Mammary epithelial cell (primary cell): ENCODE measurements at regions of chr19 and their contacts with region 1.

Region 1: GRCh38 chr19:36489118-36489919 is at the start of gene ZNF566:
- DNase-seq: peak; percentile 96
- H3K4me3 ChIP-seq: peak within 1 kb of the TSS; percentile 61 to 72 (median 68)
- H3K27ac ChIP-seq: peak within 1 kb of the TSS; percentile 87
- H3K4me1 ChIP-seq: no peaks in the 10 kb centered on the region
- H3K27me3 ChIP-seq: no peaks in the 10 kb centered on the region
- CTCF ChIP-seq: no peak
- total RNA-seq, gene ZNF566: 6.0 to 7.2 TPM

Region 2: DNA sequence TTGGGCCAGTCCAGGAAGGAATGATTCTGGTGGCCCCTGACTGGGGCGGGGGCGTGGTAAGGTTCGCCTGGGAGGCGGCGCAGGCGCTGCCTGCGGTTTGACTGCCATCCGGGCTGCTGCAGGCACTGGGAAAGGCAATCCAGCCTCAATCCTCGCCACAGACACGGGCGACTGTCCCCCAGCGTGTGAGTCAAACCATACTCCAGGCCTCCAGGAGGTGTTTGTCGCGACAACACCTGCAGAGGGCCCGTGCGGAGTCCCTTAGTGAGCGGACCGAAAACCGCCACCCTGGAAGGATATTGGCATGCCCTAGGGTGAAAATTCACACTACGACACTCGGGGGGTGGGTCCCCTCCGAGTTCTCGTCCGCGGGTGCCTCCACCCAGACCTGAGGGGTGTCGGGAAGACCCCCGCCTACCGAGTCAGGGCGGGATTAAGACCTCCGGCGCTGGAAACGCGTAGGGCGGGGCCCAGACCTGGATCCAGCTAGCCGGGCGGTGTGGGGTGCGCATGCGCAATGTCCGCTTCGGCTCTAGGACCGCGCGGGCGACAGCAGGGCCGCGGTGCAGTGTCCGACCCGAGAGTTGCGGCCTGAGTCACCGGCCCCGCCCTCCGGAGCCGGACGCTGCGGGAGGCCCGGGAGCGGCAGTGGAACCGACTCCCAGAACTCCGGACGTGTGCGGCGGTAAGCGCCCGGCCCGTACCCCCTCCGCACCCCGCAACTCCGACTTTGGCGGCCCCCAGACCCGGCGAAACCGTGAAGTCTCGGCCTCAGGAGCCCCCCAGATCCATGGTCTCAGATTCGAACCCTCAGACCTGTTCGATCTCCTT is 349.6 kb before region 1 on chr19 and contains the start of gene CAPNS1:
- CTCF ChIA-PET with region 1: no interaction called
- dilution Hi-C with region 1: no loop called
- in situ Hi-C with region 1: loop called in 1 of 2 experiments (anchors 10 kb)
- intact Hi-C with region 1: no loop called
- DNase-seq: peak; percentile 95
- H3K4me3 ChIP-seq: peak within 1 kb of the TSS; percentile 77 to 87 (median 83)
- H3K27ac ChIP-seq: peak within 1 kb of the TSS; percentile 98
- H3K4me1 ChIP-seq: peaks cover 34% of the 10 kb centered on the region
- H3K27me3 ChIP-seq: no peaks in the 10 kb centered on the region
- CTCF ChIP-seq: peak; percentile 5 to 28
- total RNA-seq, gene CAPNS1: 328 to 1,073 TPM

Region 3: DNA sequence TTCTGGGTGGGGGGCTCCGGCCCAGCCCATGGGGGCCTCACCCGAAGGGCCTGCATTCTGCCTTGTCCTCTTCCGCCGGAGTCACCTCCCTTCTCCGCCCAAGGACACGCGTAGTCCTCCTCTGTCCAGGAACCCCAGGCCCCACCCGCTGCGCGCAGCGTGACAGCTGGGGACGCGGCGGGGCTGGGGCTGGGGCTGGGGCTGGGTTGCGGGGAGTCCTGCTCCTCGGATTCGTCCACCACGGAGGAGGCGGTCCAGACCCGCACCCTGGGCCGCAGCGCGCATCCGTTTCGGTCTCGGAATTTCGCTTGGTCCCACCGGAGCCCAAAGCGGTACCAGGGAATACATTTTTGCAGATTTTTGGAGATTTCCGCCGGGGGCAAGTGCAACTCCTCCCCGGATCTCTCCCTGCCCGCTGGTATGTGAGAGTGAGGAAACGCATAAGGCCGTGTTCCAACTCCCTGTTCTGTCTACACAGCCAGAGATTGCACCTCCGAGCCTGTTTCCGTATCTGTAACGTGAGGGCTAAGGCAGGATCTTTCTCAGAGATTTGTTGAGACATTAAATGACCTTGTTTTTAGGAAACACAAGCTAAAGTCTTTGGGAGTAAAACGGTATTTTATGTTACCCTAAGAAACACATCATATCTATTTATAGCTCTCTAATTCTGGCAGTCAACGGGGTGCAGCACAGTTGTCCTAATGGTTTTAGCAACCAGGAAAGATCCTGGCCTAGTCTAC is 336.8 kb before region 1 on chr19 and contains the start of gene COX7A1:
- CTCF ChIA-PET with region 1: no interaction called
- dilution Hi-C with region 1: no loop called
- in situ Hi-C with region 1: no loop called
- intact Hi-C with region 1: no loop called
- DNase-seq: no peak
- H3K4me3 ChIP-seq: no peak within 1 kb of the TSS
- H3K27ac ChIP-seq: no peak within 1 kb of the TSS
- H3K4me1 ChIP-seq: peaks cover 23% of the 10 kb centered on the region
- H3K27me3 ChIP-seq: no peaks in the 10 kb centered on the region
- CTCF ChIP-seq: no peak
- total RNA-seq, gene COX7A1: 1.0 TPM in 1 of 2 donors, not detected in the other

Region 4: DNA sequence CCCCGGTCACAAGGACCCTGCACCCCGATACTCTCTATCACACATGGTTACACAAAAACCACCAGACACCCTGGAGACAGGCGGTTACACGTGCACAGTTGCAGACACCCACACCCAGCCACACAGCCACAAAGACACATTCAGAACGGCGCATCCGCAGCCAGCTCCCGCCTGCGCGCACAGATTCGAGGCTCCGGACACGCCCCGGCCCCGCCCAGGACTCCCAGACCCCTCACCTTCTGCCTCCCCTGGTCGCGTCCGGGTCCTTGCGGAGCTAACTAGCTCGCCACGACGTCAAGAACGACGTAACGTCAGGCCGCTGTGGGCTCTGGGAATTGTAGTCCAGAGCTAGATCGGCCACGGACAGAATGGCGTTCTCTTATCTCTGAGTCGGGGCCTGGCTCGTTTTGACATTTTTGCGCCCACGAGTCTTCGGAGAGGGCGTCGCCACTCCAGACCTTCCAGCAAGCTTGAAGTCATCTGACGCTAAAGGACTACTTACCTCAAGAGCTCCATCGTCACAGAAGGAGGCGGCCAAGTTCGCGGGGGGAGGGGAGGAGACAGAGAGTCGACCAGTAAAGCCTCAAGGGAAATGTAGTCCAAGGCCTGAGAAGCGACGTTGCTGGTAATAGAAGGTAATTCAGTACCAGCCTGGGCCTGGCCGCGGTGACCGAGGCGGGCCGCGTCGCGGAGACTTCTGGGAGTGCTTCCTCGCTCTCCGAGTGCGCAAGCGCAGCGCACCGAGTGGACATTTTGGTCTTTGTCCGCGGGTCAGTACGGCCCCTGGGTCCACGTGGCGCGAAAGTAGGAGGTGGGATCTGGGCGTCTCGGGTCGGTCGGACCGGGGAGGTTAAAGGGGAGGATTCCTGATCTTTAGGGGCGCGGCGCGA is 274.7 kb before region 1 on chr19 and contains the starts of genes ZNF146 and ZNF565:
- CTCF ChIA-PET with region 1: no interaction called
- dilution Hi-C with region 1: no loop called
- in situ Hi-C with region 1: no loop called
- intact Hi-C with region 1: loop called (anchors 1 kb)
- DNase-seq: peak; percentile 98
- H3K4me3 ChIP-seq: peak within 1 kb of the TSS; percentile 88 to 95 (median 88)
- H3K27ac ChIP-seq: peak within 1 kb of the TSS; percentile 85
- H3K4me1 ChIP-seq: peaks cover 7% of the 10 kb centered on the region
- H3K27me3 ChIP-seq: no peaks in the 10 kb centered on the region
- CTCF ChIP-seq: no peak
- total RNA-seq, gene ZNF146: 74.5 to 77.3 TPM
- total RNA-seq, gene ZNF565: 2.8 to 3.5 TPM

Region 5: DNA sequence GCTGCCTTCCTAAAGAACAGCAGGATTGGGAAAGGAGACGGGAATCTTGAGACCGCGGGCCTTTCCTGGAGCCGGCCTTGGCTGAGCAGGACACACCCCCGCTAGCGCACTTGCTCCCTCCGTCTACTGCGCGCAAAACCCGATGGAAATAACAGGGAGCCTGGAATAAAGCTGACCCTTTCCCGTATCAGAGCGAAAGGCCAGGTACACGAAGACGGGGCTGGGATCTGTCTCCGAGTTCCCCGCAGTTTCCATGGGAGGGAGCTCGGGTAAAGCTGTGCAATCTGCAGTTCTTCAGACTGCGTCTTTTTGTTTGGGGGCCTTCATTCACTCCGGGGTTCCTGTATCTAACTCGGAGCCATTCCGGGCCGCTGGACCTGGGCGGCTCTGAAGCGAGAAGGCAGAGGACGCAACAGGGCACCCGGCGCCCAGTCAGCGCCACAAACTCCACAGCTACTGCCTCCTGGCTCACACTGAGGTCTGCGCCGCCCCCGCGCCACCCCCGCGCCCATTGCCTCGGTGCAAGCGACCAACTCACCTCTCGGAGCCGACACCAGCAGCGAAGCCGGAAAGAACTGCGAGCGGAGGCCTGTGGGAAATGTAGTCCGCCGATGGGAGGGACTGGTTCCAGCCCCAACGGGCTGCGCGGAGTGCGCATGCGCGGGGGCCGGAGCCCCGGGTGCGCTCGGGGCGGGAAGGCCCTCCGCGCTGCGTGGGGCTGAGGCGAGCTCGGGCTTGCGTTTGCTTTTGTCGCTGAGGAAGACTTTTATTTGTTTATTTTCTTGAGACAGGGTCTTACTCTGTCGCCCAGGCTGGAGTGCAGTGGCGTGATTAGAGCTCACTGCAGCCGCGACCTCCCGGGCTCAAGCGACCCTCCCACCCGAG is 110.5 kb before region 1 on chr19 and contains the start of gene ZFP14:
- CTCF ChIA-PET with region 1: no interaction called
- dilution Hi-C with region 1: no loop called
- in situ Hi-C with region 1: no loop called
- intact Hi-C with region 1: loop called (anchors 1 kb)
- DNase-seq: peak; percentile 93
- H3K4me3 ChIP-seq: peak within 1 kb of the TSS; percentile 71 to 95 (median 75)
- H3K27ac ChIP-seq: peak within 1 kb of the TSS; percentile 52
- H3K4me1 ChIP-seq: peaks cover 6% of the 10 kb centered on the region
- H3K27me3 ChIP-seq: no peaks in the 10 kb centered on the region
- CTCF ChIP-seq: peak in 1 of 2 donors; percentile 45
- total RNA-seq, gene ZFP14: 0.73 to 2.5 TPM

Region 6: DNA sequence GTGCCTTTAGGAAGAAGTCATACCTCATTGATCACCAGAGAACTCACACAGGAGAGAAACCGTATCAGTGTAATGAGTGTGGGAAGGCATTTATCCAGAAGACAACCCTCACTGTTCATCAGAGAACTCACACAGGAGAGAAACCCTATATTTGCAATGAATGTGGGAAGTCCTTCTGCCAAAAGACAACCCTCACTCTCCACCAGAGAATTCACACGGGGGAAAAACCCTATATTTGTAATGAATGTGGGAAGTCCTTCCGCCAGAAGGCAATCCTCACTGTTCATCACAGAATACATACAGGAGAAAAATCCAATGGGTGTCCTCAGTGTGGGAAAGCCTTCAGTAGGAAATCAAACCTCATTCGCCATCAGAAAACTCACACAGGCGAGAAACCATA is 137.7 kb after region 1 on chr19:
- CTCF ChIA-PET with region 1: no interaction called
- dilution Hi-C with region 1: no loop called
- in situ Hi-C with region 1: no loop called
- intact Hi-C with region 1: no loop called
- DNase-seq: no peak
- H3K4me3 ChIP-seq: no peak overlapping the region
- H3K27ac ChIP-seq: no peak overlapping the region
- H3K4me1 ChIP-seq: no peaks in the 10 kb centered on the region
- H3K27me3 ChIP-seq: no peaks in the 10 kb centered on the region
- CTCF ChIP-seq: no peak

Region 7: DNA sequence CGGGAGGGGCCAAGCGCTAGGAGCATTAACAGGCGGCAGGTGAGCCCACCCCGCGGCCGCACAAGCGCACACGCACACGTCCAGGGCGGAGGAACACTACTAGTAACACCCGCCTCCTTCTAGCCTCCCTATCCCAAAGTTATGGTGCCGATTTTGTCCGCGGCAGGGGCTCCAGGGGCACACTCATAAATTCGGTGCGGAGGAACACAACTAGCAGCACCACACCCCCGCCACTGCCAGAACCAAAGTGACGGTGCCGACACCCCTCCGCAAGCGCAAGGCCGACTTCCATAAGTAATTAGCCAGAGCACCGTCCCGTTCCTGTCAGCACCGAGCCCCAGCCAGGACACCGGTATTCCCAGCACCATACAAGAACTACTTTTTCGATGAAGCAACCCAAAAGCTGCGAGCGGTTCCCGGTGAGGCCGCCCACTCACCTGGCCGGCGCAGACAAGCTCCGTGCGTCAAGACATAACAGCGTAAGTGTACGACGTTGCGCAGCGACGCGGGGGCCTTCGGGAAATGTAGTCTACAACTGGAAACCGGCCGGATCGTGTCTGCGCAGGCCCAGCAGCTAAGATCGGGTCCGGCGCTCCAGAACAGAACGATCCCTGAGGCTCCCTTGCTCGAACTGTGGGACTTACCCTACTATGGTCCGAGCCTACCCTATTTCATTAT is 1105.1 kb after region 1 on chr19 and contains the starts of genes ZNF540 and ZNF571:
- CTCF ChIA-PET with region 1: no interaction called
- dilution Hi-C with region 1: no loop called
- in situ Hi-C with region 1: no loop called
- intact Hi-C with region 1: loop called (anchors 1 kb)
- DNase-seq: peak; percentile 98
- H3K4me3 ChIP-seq: peak within 1 kb of the TSS; percentile 62 to 81 (median 69)
- H3K27ac ChIP-seq: peak within 1 kb of the TSS; percentile 54
- H3K4me1 ChIP-seq: no peaks in the 10 kb centered on the region
- H3K27me3 ChIP-seq: no peaks in the 10 kb centered on the region
- CTCF ChIP-seq: no peak
- total RNA-seq, gene ZNF540: 0.73 to 1.5 TPM
- total RNA-seq, gene ZNF571: 3.8 to 5.3 TPM